ENCODE measurements at regions of chr14 and their contacts with region 1.

Region 1: GRCh38 chr14:20343092-20343861 is at the start of gene PARP2:
- DNase-seq: peak; percentile 100
- H3K4me3 Mint-ChIP-seq: peak within 1 kb of the TSS; percentile 78
- H3K27ac Mint-ChIP-seq: peak within 1 kb of the TSS; percentile 92
- H3K4me1 Mint-ChIP-seq: peaks cover 7% of the 10 kb centered on the region
- H3K27me3 Mint-ChIP-seq: no peaks in the 10 kb centered on the region
- CTCF ChIP-seq: no peak
- total RNA-seq, gene PARP2: 30.4 and 33.4 TPM in 2 replicates

Region 2: DNA sequence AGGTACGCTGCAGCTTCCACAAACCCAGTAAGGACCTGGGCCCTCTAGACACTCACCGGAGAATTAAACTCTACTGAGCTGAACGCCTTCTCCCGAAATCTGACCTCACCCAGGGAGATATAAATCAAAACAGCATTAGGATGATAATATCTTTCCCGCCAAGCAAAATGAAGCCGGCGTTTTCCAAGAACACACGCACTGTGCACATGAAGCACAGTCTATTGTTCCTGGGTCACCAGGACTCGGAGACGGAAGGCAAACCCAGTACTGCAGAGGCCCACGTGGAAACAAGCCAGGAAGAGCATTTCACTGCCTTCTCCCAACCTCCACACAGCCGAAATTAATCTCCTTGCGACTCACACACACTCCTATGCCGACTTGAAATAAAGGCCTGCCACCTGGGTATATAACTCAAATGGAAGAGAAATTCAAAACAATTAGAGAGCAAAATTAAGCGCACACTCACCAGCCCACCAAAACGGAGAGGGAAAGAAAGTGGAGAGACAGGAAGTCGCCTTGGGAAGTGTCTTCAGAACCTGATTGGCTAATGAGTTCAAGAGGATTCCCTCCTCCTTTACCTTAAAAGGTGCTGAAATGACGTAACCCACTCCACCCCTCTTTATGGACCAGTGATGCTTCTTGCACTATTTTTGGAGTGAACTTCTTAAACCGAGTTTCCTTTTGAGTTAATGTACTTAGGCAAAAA is 10.3 kb before region 1 on chr14 and contains the start of gene CCNB1IP1:
- CTCF ChIA-PET with region 1: interaction called, 57 read pairs
- POLR2A ChIA-PET with region 1: interaction called, 205 read pairs
- intact Hi-C with region 1: no loop called
- DNase-seq: peak; percentile 94
- H3K4me3 Mint-ChIP-seq: peak within 1 kb of the TSS; percentile 93
- H3K27ac Mint-ChIP-seq: peak within 1 kb of the TSS; percentile 94
- H3K4me1 Mint-ChIP-seq: peaks cover 25% of the 10 kb centered on the region
- H3K27me3 Mint-ChIP-seq: no peaks in the 10 kb centered on the region
- CTCF ChIP-seq: no peak
- total RNA-seq, gene CCNB1IP1: 105 and 108 TPM in 2 replicates

Region 3: DNA sequence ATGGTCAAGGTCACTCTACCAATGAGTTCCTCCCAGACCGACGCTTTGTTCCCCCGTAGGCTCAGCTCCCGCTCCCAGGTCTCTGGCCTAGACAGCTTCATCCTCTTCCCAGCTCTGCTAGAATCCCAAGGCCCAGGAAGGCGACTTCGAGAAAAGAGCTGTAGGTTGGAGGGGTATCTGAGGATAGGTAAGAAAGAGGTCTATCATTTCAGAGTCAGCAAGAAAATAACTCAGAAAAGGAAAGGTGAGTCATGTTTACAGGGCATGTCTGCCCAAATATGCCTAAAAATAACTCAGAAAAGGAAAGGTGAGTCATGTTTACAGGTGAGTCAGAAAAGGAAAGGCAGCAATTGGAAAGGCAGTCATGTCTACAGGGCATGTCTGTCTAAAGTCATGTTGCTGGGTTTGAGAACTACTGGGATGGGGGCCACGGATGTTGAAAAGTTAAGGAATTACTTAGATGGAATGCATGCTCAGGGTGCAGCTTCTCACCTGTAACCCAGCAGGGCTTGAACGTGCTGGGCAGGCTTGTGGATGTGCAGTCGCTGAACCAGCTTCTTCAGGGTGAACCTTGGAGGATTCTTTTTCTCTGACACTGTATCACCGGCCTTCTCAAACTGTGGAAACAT is 57.8 kb after region 1 on chr14:
- CTCF ChIA-PET with region 1: interaction called, 6 read pairs
- POLR2A ChIA-PET with region 1: interaction called, 11 read pairs
- intact Hi-C with region 1: no loop called
- DNase-seq: peak; percentile 84
- H3K4me3 Mint-ChIP-seq: peak overlapping the region; percentile 51
- H3K27ac Mint-ChIP-seq: peak overlapping the region; percentile 94
- H3K4me1 Mint-ChIP-seq: peaks cover 14% of the 10 kb centered on the region
- H3K27me3 Mint-ChIP-seq: no peaks in the 10 kb centered on the region
- CTCF ChIP-seq: no peak

Region 4: GRCh38 chr14:20454516-20455354 is 111.5 kb after region 1 on chr14 and contains the starts of genes APEX1 and OSGEP:
- CTCF ChIA-PET with region 1: interaction called, 3 read pairs
- POLR2A ChIA-PET with region 1: interaction called, 50 read pairs
- intact Hi-C with region 1: loop called (anchors 1 kb)
- DNase-seq: peak; percentile 99
- H3K4me3 Mint-ChIP-seq: no peak within 1 kb of the TSS
- H3K27ac Mint-ChIP-seq: no peak within 1 kb of the TSS
- H3K4me1 Mint-ChIP-seq: peaks cover 7% of the 10 kb centered on the region
- H3K27me3 Mint-ChIP-seq: no peaks in the 10 kb centered on the region
- CTCF ChIP-seq: no peak
- total RNA-seq, gene APEX1: 140 and 168 TPM in 2 replicates
- total RNA-seq, gene OSGEP: 27.2 and 34.7 TPM in 2 replicates

Region 5: GRCh38 chr14:20469242-20469889 is 126.1 kb after region 1 on chr14 and contains the start of gene PNP:
- CTCF ChIA-PET with region 1: interaction called, 3 read pairs
- POLR2A ChIA-PET with region 1: interaction called, 22 read pairs
- intact Hi-C with region 1: no loop called
- DNase-seq: peak; percentile 91
- H3K4me3 Mint-ChIP-seq: peak within 1 kb of the TSS; percentile 93
- H3K27ac Mint-ChIP-seq: peak within 1 kb of the TSS; percentile 95
- H3K4me1 Mint-ChIP-seq: peaks cover 33% of the 10 kb centered on the region
- H3K27me3 Mint-ChIP-seq: no peaks in the 10 kb centered on the region
- CTCF ChIP-seq: no peak
- total RNA-seq, gene PNP: 56.0 and 63.9 TPM in 2 replicates